CD8-positive, alpha-beta memory T cell (primary cell): ENCODE measurements at regions of chr2 and their contacts with region 1.

Region 1: DNA sequence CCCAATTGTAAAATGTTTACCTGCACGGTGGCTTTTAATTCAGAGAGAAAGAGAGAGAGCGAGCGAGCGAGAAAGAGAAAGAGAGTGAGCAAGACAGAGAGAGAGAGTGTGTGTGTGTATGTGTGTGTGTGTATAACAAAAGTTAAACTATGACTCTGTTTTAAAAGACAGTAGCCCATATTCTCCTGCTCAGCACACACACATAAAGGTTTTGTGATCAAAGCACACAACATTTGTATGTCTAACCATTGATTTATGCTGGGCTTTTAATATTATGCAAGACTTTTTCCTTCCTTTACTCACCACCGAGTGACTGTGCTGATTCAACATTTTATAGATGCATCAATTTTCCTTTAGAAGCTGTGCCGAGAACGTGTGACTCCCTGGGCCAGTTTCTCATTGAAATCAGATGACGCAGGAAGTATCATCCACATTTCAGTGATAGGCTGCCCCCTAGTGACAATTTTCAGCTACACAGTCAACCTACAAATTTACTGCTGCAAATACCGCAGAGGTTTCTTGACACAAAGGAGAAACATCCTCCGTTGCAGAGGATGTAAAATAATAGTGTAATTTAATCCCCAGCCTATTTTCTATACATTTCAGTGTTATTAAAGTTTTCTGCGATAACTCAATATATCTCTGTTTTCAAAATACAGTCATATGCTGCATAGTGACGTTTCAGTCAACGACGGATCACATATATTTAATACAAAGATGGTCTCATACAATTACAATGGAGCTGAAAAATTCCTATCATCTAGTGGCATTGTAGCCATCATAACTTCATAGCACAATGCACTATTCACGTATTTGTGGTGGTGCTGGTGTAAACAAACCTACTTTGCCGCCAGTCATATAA is 165.9 kb upstream of the TANK start:
- DNase-seq: peak; percentile 43 to 75 (median 66)
- H3K4me3 ChIP-seq: no peak overlapping the region
- H3K4me3 Mint-ChIP-seq: peak overlapping the region in 5 of 7 donors; percentile 2 to 60 (median 35)
- H3K27ac ChIP-seq: no peak overlapping the region
- H3K27ac Mint-ChIP-seq: peak overlapping the region in 2 of 8 donors; percentile 14 to 64
- H3K4me1 ChIP-seq: no peaks in the 10 kb centered on the region
- H3K4me1 Mint-ChIP-seq: peaks cover 5 to 10% (median 10%) of the 10 kb centered on the region in 3 donors
- H3K27me3 ChIP-seq: no peaks in the 10 kb centered on the region
- H3K27me3 Mint-ChIP-seq: no peaks in the 10 kb centered on the region

Region 2: GRCh38 chr2:160109936-160110673 is 884.3 kb before region 1 on chr2:
- CTCF ChIA-PET with region 1: interaction called, 13 read pairs
- POLR2A ChIA-PET with region 1: no interaction called
- DNase-seq: peak in 4 of 5 donors; percentile 23 to 52 (median 34)
- H3K4me3 ChIP-seq: no peak overlapping the region
- H3K4me3 Mint-ChIP-seq: no peak overlapping the region
- H3K27ac ChIP-seq: no peak overlapping the region
- H3K27ac Mint-ChIP-seq: no peak overlapping the region
- H3K4me1 ChIP-seq: no peaks in the 10 kb centered on the region
- H3K4me1 Mint-ChIP-seq: no peaks in the 10 kb centered on the region
- H3K27me3 ChIP-seq: no peaks in the 10 kb centered on the region
- H3K27me3 Mint-ChIP-seq: peaks cover 20 to 61% of the 10 kb centered on the region in 2 donors

Region 3: DNA sequence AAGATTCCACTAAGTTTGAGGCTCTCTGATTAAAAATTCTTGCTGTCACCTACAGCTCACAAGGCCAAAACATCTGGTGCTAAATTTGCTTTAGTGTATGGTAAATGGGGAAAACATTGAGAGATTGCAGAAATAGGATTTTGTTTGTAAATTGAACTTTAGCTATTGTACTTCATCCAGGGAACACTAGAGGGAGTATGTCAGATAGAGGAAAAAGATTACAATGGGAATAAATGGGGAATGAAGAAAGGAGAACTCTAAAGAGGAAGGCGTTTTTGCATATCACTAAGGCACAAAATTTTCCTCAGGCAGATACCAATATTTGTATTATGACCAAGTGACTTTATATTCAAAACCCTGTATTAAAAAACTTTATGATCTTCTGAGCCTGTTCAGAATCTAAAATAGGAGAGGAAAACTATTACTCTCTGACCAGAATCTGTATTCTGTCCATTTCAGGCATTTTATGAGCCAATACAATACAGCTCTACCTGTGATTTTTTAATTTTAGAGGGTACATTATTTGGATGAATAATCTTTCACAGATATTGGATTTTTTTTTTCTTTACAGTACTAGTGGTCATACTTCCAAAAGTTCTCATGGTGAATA is 742.0 kb before region 1 on chr2:
- CTCF ChIA-PET with region 1: interaction called, 79 read pairs
- POLR2A ChIA-PET with region 1: no interaction called
- DNase-seq: no peak
- H3K4me3 ChIP-seq: no peak overlapping the region
- H3K4me3 Mint-ChIP-seq: no peak overlapping the region
- H3K27ac ChIP-seq: no peak overlapping the region
- H3K27ac Mint-ChIP-seq: no peak overlapping the region
- H3K4me1 ChIP-seq: no peaks in the 10 kb centered on the region
- H3K4me1 Mint-ChIP-seq: no peaks in the 10 kb centered on the region
- H3K27me3 ChIP-seq: no peaks in the 10 kb centered on the region
- H3K27me3 Mint-ChIP-seq: peaks cover 4 to 19% of the 10 kb centered on the region in 2 donors

Region 4: GRCh38 chr2:160324161-160324800 is 670.1 kb before region 1 on chr2:
- CTCF ChIA-PET with region 1: interaction called, 40 read pairs
- POLR2A ChIA-PET with region 1: no interaction called
- DNase-seq: peak; percentile 16 to 54 (median 25)
- H3K4me3 ChIP-seq: no peak overlapping the region
- H3K4me3 Mint-ChIP-seq: no peak overlapping the region
- H3K27ac ChIP-seq: no peak overlapping the region
- H3K27ac Mint-ChIP-seq: peak overlapping the region in 1 of 8 donors; percentile 52
- H3K4me1 ChIP-seq: peaks cover 73% of the 10 kb centered on the region
- H3K4me1 Mint-ChIP-seq: peaks cover 83 to 100% (median 98%) of the 10 kb centered on the region in 3 donors
- H3K27me3 ChIP-seq: no peaks in the 10 kb centered on the region
- H3K27me3 Mint-ChIP-seq: no peaks in the 10 kb centered on the region

Region 5: DNA sequence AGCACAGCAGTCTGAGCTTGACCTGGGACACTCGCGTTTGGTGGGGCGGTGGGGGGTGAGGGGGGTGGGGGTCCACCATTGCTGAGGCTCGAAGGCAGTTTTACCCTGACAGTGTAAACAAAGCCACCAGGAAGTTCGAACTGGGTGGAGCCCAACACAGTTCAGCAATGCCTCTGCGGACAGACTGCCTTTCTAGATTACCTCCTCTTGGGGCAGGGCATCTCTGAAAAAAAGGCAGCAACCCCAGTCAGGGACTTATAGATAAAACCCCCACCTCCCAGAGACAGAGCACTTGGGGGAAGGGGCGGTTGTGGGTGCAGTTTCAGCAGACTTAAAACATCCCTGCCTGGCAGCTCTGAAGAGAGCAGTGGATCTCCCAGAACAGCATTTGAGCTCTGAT is 16.2 kb after region 1 on chr2:
- CTCF ChIA-PET with region 1: no interaction called
- POLR2A ChIA-PET with region 1: no interaction called
- DNase-seq: no peak
- H3K4me3 ChIP-seq: no peak overlapping the region
- H3K4me3 Mint-ChIP-seq: no peak overlapping the region
- H3K27ac ChIP-seq: no peak overlapping the region
- H3K27ac Mint-ChIP-seq: no peak overlapping the region
- H3K4me1 ChIP-seq: no peaks in the 10 kb centered on the region
- H3K4me1 Mint-ChIP-seq: no peaks in the 10 kb centered on the region
- H3K27me3 ChIP-seq: no peaks in the 10 kb centered on the region
- H3K27me3 Mint-ChIP-seq: peaks cover 13 to 42% of the 10 kb centered on the region in 2 donors

Region 6: DNA sequence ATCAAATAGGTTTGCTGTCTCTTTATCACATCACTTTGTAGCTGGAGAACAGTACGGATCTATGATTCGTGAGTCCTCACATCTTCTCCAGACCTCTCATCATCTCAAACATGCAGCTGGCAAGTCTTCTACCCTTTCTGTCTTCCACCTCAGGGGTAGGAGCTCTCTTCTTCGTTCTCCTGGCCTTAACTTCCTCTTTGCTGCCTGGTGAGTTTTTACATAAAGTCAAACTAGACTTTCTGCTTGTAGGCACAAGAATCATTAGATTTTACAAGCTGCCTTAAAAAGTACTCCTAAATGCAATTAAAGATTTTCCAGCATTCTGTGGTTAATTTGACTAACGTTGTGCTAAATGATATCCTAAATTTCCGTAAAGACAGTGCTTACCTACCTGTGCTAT is 122.1 kb after region 1 on chr2:
- CTCF ChIA-PET with region 1: no interaction called
- POLR2A ChIA-PET with region 1: no interaction called
- DNase-seq: no peak
- H3K4me3 ChIP-seq: no peak overlapping the region
- H3K4me3 Mint-ChIP-seq: no peak overlapping the region
- H3K27ac ChIP-seq: no peak overlapping the region
- H3K27ac Mint-ChIP-seq: no peak overlapping the region
- H3K4me1 ChIP-seq: no peaks in the 10 kb centered on the region
- H3K4me1 Mint-ChIP-seq: no peaks in the 10 kb centered on the region
- H3K27me3 ChIP-seq: no peaks in the 10 kb centered on the region
- H3K27me3 Mint-ChIP-seq: no peaks in the 10 kb centered on the region